ENCODE measurements at regions of chr18 and their contacts with region 1.

Region 1: GRCh38 chr18:50218432-50219197 is 23.7 kb upstream of the MYO5B start:
- DNase-seq: no peak
- ATAC-seq: peak in 3 of 8 donors; percentile 29 to 52 (median 38)
- H3K4me3 ChIP-seq: no peak overlapping the region
- H3K27ac ChIP-seq: no peak overlapping the region
- H3K4me1 ChIP-seq: peaks cover 0 to 6% (median 0%) of the 10 kb centered on the region in 9 donors
- H3K27me3 ChIP-seq: peaks cover 0 to 10% (median 0%) of the 10 kb centered on the region in 7 donors
- CTCF ChIP-seq: peak in 6 of 9 donors; percentile 24 to 39 (median 36)

Region 2: DNA sequence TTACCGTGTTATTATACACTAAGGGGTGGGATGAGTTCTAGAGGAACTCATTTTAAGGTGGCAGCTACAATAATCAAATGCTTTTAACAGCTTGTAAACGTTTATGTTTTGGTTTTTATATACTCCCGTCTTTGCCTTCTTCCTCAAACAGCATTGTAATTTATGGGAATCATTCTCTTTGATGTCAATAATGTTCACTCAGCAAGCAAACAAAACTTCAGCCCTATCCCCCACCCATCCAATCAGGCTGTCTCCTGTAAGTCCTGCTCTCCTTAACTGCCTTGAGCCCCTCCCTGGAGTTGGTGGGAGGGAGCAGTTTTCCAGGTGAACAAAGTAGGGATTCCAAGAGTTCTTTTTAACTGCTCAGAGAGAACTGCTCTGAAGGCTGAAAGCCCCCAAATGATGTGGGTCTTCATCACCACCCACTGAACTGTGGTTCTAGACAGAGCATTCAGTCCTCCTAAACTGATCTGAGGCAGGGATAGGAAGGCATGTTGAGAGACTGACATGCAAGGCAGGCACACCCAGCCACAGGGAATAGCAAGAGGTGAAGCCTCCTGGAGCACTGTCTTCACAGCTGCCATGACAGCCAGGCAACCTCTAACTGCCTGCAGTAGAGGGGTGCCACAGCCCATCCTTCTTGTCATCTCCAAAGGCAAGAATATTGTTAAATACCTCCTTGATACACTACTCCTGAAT is 41.2 kb before region 1 on chr18:
- intact Hi-C with region 1: loop called in 1 of 10 experiments (anchors 1 kb)
- DNase-seq: no peak
- ATAC-seq: no peak
- H3K4me3 ChIP-seq: no peak overlapping the region
- H3K27ac ChIP-seq: no peak overlapping the region
- H3K4me1 ChIP-seq: no peaks in the 10 kb centered on the region
- H3K27me3 ChIP-seq: peaks cover 0 to 27% (median 10%) of the 10 kb centered on the region in 7 donors
- CTCF ChIP-seq: no peak

Region 3: DNA sequence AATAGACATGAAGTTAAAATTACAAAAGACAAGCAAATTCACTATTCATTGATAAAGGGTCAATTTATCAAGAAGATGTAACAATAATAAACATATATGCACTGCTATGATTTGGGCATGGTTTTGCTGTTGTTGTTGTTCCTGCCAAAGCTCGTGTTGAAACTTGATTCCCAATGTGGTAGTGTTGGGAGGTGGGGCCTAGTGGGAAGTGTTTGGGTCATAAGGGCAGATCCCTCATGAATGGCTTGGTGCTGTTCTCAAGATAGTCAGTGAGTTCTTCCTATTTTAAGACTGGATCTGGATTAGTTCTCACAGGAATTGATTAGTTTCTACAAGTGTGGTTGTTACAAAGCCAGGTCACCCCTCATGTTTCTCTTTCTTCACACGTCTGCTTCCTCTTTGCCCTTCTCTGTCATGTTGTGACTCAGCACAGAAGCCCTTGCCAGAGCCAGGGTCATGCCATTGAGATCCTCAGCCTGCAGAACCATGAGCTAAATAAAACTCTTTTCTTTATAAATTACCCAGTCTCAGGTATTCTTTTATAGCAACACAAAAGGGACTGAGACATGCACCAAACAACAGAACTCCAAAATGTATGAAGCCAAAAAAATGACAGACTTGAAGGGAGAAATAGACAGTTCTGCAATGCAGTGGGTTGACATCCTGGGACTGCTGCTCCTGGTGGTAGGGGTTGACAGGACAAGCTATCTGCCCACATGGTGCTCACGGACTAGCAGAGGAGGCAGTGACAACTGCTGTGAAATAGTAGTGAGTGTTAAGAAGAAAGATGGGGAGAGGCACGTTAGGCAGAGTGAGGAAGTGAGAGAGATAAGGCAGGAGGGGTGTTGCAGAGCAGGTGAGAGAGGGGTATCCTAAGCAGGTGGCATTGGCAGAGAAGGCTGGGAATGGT is 137.7 kb after region 1 on chr18:
- intact Hi-C with region 1: loop called in 7 of 10 experiments (anchors 5 to 10 kb)
- DNase-seq: no peak
- ATAC-seq: peak in 2 of 8 donors; percentile 62 to 63
- H3K4me3 ChIP-seq: no peak overlapping the region
- H3K27ac ChIP-seq: no peak overlapping the region
- H3K4me1 ChIP-seq: peaks cover 0 to 16% (median 0%) of the 10 kb centered on the region in 9 donors
- H3K27me3 ChIP-seq: peaks cover 0 to 26% (median 8%) of the 10 kb centered on the region in 7 donors
- CTCF ChIP-seq: peak in 1 of 9 donors; percentile 18

Region 4: GRCh38 chr18:50429207-50429948 is 210.8 kb after region 1 on chr18:
- intact Hi-C with region 1: loop called in 3 of 10 experiments (anchors 10 kb)
- DNase-seq: no peak
- ATAC-seq: no peak
- H3K4me3 ChIP-seq: no peak overlapping the region
- H3K27ac ChIP-seq: no peak overlapping the region
- H3K4me1 ChIP-seq: peaks cover 0 to 5% (median 0%) of the 10 kb centered on the region in 9 donors
- H3K27me3 ChIP-seq: no peaks in the 10 kb centered on the region
- CTCF ChIP-seq: peak; percentile 15 to 64 (median 54)

Measured in heart right ventricle (tissue), 16 donors.